Left colon (tissue), 2 donors: ENCODE measurements at regions of chr12 and their contacts with region 1.

Region 1: GRCh38 chr12:54439521-54440255 is 20.6 kb upstream of the ITGA5 start:
- DNase-seq: no peak
- ATAC-seq: peak; percentile 68

Region 2: DNA sequence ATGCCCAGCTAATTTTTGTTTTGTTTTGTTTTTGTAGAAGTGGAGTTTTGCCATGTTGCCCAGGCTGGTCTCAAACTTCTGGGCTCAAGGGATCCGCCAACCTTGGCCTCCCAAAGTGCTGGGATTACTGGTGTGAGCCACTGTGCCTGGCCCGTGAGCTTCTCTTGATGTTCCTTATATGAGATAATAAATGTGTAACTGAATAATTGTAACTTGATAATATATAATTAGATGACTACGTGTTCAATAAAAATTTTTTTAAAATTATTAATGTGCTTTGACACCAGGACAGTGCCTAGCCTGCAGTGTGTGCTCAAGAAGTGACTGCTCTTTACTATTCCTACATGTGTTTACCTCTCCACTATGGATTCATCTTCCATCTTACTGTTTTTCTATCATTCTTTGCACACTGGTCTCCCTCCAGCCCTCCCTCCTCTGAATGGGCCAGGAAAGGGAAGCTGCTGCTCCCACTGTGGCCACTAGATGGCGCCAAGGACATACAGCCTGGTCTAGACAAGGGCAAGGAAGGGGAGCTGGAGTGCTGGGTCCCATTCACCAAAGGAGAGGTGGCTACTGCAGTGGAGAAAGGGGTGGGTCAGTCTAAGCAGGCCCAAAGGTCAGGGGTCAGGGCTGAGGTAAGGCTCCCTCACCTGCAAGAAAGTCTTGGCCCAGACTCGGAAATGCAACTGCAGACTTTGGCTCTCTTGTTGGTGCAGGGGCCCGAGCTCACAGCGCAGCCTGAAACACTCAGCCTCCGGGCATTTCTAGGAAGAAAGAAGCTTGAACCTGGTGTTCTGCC is 40.5 kb before region 1 on chr12:
- intact Hi-C with region 1: loop called (anchors 5 kb)
- DNase-seq: peak; percentile 70 to 84
- ATAC-seq: peak; percentile 88

Region 3: DNA sequence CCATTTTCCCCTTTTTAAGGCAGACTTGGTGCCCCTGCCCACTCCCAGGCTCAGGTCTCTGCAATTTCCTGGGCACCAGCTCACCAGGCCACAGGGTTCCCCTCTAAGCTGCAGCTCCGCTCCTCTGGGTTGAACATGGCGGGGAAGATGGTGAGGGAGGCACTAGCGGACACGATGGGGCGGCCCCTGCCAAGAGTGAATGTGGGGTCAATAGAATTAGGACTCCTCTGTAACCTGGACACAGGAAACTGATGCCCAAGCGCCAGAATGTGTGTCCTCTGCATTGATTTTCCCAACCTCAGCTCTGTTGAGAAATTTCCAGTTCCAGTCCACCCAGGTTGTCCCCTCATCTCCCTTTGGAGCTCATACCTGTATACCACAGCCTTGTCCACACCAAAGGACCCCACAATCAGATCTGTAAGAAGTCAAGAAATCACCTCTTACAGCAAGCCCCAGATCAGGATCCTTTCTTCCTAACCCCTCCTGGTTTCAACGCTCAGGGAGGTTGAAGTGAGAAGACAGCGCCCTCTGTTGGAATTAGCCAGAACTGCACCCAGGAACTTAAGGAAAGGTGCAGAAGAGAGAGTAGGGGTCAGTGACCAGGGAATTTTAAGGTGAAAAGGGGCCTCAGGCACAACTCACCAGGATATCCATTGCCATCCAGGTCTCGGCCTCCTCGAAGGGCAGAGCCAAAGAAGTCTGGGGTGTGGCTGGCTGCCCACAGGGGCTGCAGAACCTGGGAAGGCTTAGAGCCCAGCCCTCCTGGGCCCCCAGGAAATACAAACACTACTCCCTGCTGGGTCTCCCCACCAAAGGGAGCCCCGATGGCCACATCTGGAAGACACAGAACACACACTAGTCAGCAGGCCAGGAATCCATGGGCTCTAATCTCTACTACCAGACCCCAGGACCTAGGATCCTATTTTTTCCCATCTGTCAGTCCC is 35.4 kb before region 1 on chr12:
- intact Hi-C with region 1: loop called (anchors 5 kb)
- DNase-seq: peak in 1 of 2 donors; percentile 64
- ATAC-seq: no peak